Psoas muscle (tissue), 8 donors: ENCODE measurements at regions of chr2 and their contacts with region 1.

Region 1: GRCh38 chr2:202375609-202376408 is at the start of gene BMPR2:
- DNase-seq: peak; percentile 90 to 95
- ATAC-seq: peak; percentile 88 to 92 (median 92)
- H3K4me3 ChIP-seq: peak within 1 kb of the TSS; percentile 77
- H3K27ac ChIP-seq: peak within 1 kb of the TSS; percentile 90
- H3K4me1 ChIP-seq: peaks cover 13% of the 10 kb centered on the region
- H3K27me3 ChIP-seq: no peaks in the 10 kb centered on the region
- CTCF ChIP-seq: no peak
- total RNA-seq, gene BMPR2: 21.3 to 43.2 (median 34.4) TPM

Region 2: GRCh38 chr2:201558665-201559064 is 817.1 kb before region 1 on chr2:
- intact Hi-C with region 1: no loop called
- DNase-seq: no peak
- ATAC-seq: no peak
- H3K4me3 ChIP-seq: no peak overlapping the region
- H3K27ac ChIP-seq: no peak overlapping the region
- H3K4me1 ChIP-seq: no peaks in the 10 kb centered on the region
- H3K27me3 ChIP-seq: no peaks in the 10 kb centered on the region
- CTCF ChIP-seq: no peak

Region 3: GRCh38 chr2:202278944-202279343 is 96.9 kb before region 1 on chr2:
- intact Hi-C with region 1: loop called in 1 of 2 experiments (anchors 5 kb)
- DNase-seq: no peak
- ATAC-seq: peak; percentile 63 to 76 (median 72)
- H3K4me3 ChIP-seq: no peak overlapping the region
- H3K27ac ChIP-seq: peak overlapping the region; percentile 72
- H3K4me1 ChIP-seq: peaks cover 36% of the 10 kb centered on the region
- H3K27me3 ChIP-seq: no peaks in the 10 kb centered on the region
- CTCF ChIP-seq: peak; percentile 59

Region 4: GRCh38 chr2:202317080-202317857 is 58.5 kb before region 1 on chr2:
- intact Hi-C with region 1: loop called in 1 of 2 experiments (anchors 5 kb)
- DNase-seq: peak in 1 of 2 donors; percentile 28
- ATAC-seq: peak; percentile 41 to 70 (median 54)
- H3K4me3 ChIP-seq: no peak overlapping the region
- H3K27ac ChIP-seq: no peak overlapping the region
- H3K4me1 ChIP-seq: peaks cover 17% of the 10 kb centered on the region
- H3K27me3 ChIP-seq: no peaks in the 10 kb centered on the region
- CTCF ChIP-seq: no peak

Region 5: GRCh38 chr2:202327858-202328257 is 48.0 kb before region 1 on chr2:
- intact Hi-C with region 1: no loop called
- DNase-seq: no peak
- ATAC-seq: no peak
- H3K4me3 ChIP-seq: no peak overlapping the region
- H3K27ac ChIP-seq: no peak overlapping the region
- H3K4me1 ChIP-seq: no peaks in the 10 kb centered on the region
- H3K27me3 ChIP-seq: no peaks in the 10 kb centered on the region
- CTCF ChIP-seq: no peak